Common myeloid progenitor, CD34-positive (primary cell): ENCODE measurements at regions of chr19 and their contacts with region 1.

Region 1: GRCh38 chr19:4583961-4584669 is 24.6 kb upstream of the SEMA6B start:
- DNase-seq: no peak
- H3K4me3 ChIP-seq: peak overlapping the region; percentile 19 to 66 (median 38)
- H3K27ac ChIP-seq: no peak overlapping the region
- H3K4me1 ChIP-seq: peaks cover 0 to 31% (median 28%) of the 10 kb centered on the region in 4 experiments
- H3K27me3 ChIP-seq: peaks cover 0 to 62% (median 23%) of the 10 kb centered on the region in 5 experiments

Region 2: DNA sequence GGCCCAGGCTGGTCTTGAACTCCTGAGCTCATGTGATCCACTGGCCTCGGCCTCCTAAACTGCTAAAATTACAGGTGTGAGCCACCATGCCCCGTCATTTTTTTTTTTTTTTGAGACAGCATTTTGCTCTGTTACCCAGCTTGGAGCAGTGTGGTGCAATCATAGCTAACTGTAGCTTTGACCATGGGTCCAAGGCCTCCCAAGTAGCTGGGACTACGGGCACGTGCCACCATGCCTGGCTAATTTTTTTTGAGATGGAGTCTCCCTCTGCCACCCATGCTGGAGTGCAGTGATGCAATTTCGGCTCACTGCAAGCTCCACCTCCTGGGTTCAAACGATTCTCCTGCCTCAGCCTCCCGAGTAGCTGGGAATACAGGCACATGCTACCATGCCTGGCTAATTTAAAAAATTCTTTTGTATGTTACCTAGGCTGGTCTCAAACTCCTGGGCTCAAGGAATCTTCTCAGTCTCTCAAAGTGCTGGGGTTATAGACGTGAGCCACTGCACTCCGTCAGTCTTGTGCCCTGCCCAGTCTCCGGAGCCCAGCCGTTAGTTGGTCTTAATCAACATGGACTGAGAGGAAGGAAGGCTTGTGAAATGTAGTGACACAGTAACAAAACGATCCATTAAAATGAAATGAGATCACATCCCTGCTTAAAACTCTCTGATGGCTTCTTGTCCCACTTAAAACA is 42.9 kb before region 1 on chr19:
- CTCF ChIA-PET with region 1: no interaction called
- POLR2A ChIA-PET with region 1: no interaction called
- DNase-seq: no peak
- H3K4me3 ChIP-seq: no peak overlapping the region
- H3K27ac ChIP-seq: no peak overlapping the region
- H3K4me1 ChIP-seq: peaks cover 2 to 16% (median 9%) of the 10 kb centered on the region in 4 experiments
- H3K27me3 ChIP-seq: no peaks in the 10 kb centered on the region

Region 3: DNA sequence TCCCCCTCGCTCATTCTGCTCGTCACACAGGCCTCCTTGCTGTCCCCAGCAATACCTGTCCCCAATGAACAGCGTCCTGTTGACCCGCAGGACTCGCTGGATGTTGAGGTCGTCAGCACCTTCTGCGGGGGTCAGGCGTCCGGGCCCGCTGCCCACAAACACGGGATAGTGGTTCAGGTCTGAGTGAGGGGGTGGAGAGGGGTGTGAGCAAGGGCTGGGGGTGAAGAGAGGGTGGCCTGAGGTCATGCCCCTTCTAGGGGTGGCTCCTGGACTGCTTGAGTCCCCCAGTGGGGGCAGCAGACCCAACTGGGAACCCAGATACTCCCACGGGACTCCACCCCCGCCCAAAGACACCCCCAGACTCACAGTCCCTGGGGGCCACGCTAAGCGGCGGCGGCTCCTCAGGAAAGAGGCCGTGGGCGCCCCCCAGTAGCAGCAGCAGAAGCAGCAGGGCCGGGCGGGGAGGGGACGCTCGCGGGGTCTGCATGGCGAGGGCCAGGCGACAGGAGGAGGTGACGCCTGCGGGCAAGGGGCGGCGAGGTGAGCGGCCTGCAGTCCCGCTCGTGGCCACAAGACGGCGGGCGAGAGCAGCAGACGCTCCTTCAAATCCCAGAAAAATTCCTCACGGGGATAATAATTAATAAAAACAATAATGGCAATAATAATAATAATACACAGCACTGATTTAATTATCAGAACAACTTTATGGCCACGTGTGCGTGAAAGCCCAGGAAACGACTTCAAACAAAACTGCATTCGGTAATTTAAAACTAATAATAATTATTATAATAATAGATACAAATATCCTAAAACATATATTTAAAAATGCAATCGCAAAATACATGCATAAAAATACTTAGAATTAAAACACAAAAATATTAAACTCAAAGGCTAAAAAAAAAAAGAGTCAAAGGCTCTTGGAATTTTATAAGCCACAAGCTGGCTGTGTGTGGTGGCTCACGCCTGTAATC is 25.9 kb before region 1 on chr19:
- CTCF ChIA-PET with region 1: no interaction called
- POLR2A ChIA-PET with region 1: interaction called, 10 read pairs
- DNase-seq: peak in 1 of 3 donors; percentile 39
- H3K4me3 ChIP-seq: no peak overlapping the region
- H3K27ac ChIP-seq: no peak overlapping the region
- H3K4me1 ChIP-seq: peaks cover 0 to 19% (median 9%) of the 10 kb centered on the region in 4 experiments
- H3K27me3 ChIP-seq: no peaks in the 10 kb centered on the region

Region 4: GRCh38 chr19:4597975-4598671 is 14.0 kb after region 1 on chr19:
- CTCF ChIA-PET with region 1: interaction called, 10 read pairs
- POLR2A ChIA-PET with region 1: no interaction called
- DNase-seq: peak; percentile 83 to 92 (median 90)
- H3K4me3 ChIP-seq: peak overlapping the region; percentile 22 to 71 (median 48)
- H3K27ac ChIP-seq: no peak overlapping the region
- H3K4me1 ChIP-seq: peaks cover 0 to 17% (median 16%) of the 10 kb centered on the region in 4 experiments
- H3K27me3 ChIP-seq: peaks cover 0 to 30% (median 7%) of the 10 kb centered on the region in 5 experiments